Left lung (tissue), 14 donors: ENCODE measurements at regions of chr3 and their contacts with region 1.

Region 1: GRCh38 chr3:25856902-25857518 is 67.1 kb downstream of the OXSM start:
- DNase-seq: peak in 1 of 4 donors; percentile 13
- ATAC-seq: peak; percentile 70
- H3K4me3 ChIP-seq: no peak overlapping the region
- H3K27ac ChIP-seq: no peak overlapping the region
- H3K4me1 ChIP-seq: peaks cover 0 to 6% of the 10 kb centered on the region in 2 donors
- H3K27me3 ChIP-seq: no peaks in the 10 kb centered on the region
- CTCF ChIP-seq: peak; percentile 72 to 73

Region 2: DNA sequence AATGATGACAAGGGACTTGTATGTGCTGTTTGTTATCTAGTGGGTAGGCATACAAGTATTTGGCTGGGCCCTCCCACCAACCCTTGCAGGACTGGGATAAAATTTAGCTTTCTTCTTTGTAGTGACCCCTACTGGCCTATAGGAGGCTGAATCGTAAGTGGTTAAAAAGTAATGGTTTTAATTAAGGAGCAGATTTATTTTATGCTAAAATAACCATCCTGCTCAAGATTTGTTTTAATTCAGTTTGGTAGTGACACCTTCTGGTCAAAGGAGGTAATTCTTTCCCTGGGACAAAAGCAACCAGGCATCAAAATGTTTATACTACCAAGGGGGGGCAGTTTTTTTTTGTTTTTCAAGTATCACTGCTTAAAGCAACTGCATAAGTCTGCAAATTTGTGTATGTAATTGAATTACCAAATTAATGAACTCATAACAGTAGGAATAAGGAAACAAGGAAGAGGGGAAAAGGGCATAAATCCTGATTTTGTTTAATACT is 263.0 kb before region 1 on chr3:
- intact Hi-C with region 1: no loop called
- DNase-seq: peak in 2 of 4 donors; percentile 60 to 77
- ATAC-seq: peak; percentile 77
- H3K4me3 ChIP-seq: no peak overlapping the region
- H3K27ac ChIP-seq: no peak overlapping the region
- H3K4me1 ChIP-seq: peaks cover 9 to 25% of the 10 kb centered on the region in 2 donors
- H3K27me3 ChIP-seq: no peaks in the 10 kb centered on the region
- CTCF ChIP-seq: peak; percentile 68 to 82

Region 3: GRCh38 chr3:25648107-25648535 is 208.9 kb before region 1 on chr3:
- intact Hi-C with region 1: loop called in 1 of 2 experiments (anchors 5 kb)
- DNase-seq: peak in 3 of 4 donors; percentile 32 to 61 (median 55)
- ATAC-seq: peak; percentile 100
- H3K4me3 ChIP-seq: no peak overlapping the region
- H3K27ac ChIP-seq: no peak overlapping the region
- H3K4me1 ChIP-seq: peaks cover 0 to 18% of the 10 kb centered on the region in 2 donors
- H3K27me3 ChIP-seq: no peaks in the 10 kb centered on the region
- CTCF ChIP-seq: peak; percentile 86 to 92